GM13976 (cell line): ENCODE measurements at regions of chr10 and their contacts with region 1.

Region 1: DNA sequence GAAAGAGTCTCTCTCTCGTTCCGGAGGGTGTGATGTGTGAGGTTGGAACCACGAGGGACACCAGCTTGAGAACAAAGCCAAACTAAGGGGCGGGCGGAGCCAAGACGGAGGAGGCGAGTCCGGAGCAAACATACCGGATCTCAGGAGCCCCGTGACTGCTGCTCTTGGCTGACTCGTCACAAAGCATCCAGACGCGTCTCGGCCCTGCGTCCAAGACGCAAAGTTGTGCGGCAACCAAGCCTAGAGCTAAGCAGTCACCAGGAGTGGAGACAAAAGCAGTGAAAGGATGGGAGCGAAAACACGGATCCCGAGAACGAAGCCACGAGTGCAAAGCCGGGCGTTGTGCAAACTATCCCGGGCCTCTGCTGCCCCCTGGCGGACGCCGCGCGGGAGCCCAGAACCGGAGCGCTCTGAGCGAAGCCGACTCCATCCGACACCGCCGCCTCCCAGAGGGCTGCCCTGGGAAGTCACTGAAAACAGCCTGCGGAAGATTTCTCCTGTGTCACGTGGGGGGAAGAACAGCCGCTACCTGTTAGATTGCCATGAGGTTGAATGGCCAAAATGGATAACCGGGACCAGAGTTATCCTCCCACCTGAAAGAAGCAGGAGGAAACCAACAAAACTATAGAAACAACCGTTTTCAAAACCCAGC is 46.4 kb upstream of the TMEM72 start:
- DNase-seq: peak; percentile 91
- CTCF ChIP-seq: peak; percentile 90

Region 2: DNA sequence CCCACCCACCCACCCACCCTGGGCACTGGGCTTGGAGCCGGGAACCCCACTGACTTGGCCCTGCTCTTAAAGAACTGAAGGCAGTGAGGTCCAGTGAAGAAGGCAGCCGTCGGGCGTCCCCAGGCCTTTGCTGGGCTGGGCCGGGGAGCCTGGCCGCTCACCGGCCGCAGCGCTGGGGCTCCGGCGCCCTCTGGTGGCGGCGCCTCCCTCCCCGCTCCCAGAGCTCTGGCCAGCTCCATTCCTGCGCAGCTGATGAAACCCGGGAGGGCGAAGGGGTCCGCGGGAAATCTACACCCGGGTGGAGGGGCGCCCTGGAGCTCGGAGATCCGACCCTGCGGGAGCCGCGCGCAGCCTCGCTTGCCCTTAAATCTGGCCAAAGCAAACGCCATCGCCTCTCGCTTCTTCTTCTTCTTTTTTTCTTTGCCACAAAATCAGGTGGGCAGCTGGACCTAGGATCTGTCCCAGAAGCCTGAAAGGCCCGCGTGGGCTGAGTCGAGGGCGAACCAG is 478.2 kb before region 1 on chr10:
- in situ Hi-C with region 1: loop called (anchors 25 kb)
- DNase-seq: peak; percentile 90
- CTCF ChIP-seq: peak; percentile 91